IMR-90 (cell line): ENCODE measurements at regions of chr7 and their contacts with region 1.

Region 1: GRCh38 chr7:80151274-80151665 is 16.6 kb downstream of the GNAI1 start:
- DNase-seq: peak; percentile 57
- ATAC-seq: peak; percentile 20; the same call in 1 of the 2 replicates
- H3K4me3 ChIP-seq: no peak overlapping the region
- H3K27ac ChIP-seq: no peak overlapping the region
- H3K4me1 ChIP-seq: peaks cover 20% of the 10 kb centered on the region
- H3K27me3 ChIP-seq: no peaks in the 10 kb centered on the region
- CTCF ChIP-seq: no peak
- POLR2A ChIP-seq: no peak
- RAD21 ChIP-seq: no peak

Region 2: DNA sequence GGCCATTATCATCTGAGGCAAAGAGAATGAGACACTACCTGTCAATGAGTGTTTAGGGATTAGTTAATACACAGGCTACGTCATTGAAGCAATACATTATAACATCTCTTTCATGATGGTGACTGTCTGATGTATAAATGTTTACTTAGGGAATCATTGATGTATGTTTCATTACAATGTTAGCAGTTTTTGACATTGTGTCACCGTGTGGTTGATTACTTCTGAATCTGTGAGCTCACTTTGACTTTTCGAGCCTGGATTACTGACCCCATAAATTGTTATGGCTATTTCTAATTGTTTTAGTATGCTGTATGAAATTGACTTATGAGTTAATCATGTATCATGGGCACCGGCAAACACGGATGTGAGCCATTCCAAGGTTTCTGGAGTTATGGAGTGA is 1191.8 kb before region 1 on chr7:
- CTCF ChIA-PET with region 1: no interaction called
- POLR2A ChIA-PET with region 1: no interaction called
- dilution Hi-C with region 1: no loop called
- in situ Hi-C with region 1: no loop called
- intact Hi-C with region 1: no loop called
- DNase-seq: peak; percentile 76
- ATAC-seq: no peak; the same call in 1 of the 2 replicates
- H3K4me3 ChIP-seq: no peak overlapping the region
- H3K27ac ChIP-seq: no peak overlapping the region
- H3K4me1 ChIP-seq: no peaks in the 10 kb centered on the region
- H3K27me3 ChIP-seq: no peaks in the 10 kb centered on the region
- CTCF ChIP-seq: no peak
- POLR2A ChIP-seq: no peak
- RAD21 ChIP-seq: no peak

Region 3: DNA sequence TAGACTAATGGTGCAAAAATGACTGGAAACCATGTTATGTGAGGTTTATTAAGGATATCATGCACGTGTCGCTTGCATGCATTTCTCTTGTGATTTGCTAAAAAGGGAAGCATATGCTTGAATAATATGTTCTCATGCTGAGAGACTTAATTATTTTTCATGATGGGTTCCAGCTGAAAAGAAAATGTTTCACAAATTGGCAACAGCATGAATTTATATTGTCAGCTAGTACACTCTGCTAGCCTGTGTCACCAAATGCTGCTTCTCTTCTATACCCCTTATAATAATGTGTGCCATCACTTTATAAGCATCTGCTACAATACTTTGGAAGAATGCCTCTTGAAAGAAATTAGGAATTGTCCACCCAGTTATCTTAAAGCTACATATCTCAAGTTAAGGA is 46.4 kb after region 1 on chr7:
- CTCF ChIA-PET with region 1: no interaction called
- POLR2A ChIA-PET with region 1: no interaction called
- dilution Hi-C with region 1: no loop called
- in situ Hi-C with region 1: no loop called
- intact Hi-C with region 1: loop called (anchors 5 kb)
- DNase-seq: no peak
- ATAC-seq: no peak
- H3K4me3 ChIP-seq: no peak overlapping the region
- H3K27ac ChIP-seq: no peak overlapping the region
- H3K4me1 ChIP-seq: no peaks in the 10 kb centered on the region
- H3K27me3 ChIP-seq: no peaks in the 10 kb centered on the region
- CTCF ChIP-seq: no peak
- POLR2A ChIP-seq: no peak
- RAD21 ChIP-seq: no peak